Heart right ventricle (tissue), 16 donors: ENCODE measurements at regions of chr1 and their contacts with region 1.

Region 1: GRCh38 chr1:40668769-40669525 is 3.5 kb upstream of the RIMS3 start:
- DNase-seq: peak; percentile 73 to 80
- ATAC-seq: peak in 7 of 8 donors; percentile 26 to 79 (median 67)
- H3K4me3 ChIP-seq: peak overlapping the region in 1 of 10 donors; percentile 30
- H3K27ac ChIP-seq: no peak overlapping the region
- H3K4me1 ChIP-seq: peaks cover 0 to 16% (median 12%) of the 10 kb centered on the region in 9 donors
- H3K27me3 ChIP-seq: peaks cover 0 to 3% (median 0%) of the 10 kb centered on the region in 7 donors
- CTCF ChIP-seq: peak; percentile 90 to 98 (median 96)

Region 2: DNA sequence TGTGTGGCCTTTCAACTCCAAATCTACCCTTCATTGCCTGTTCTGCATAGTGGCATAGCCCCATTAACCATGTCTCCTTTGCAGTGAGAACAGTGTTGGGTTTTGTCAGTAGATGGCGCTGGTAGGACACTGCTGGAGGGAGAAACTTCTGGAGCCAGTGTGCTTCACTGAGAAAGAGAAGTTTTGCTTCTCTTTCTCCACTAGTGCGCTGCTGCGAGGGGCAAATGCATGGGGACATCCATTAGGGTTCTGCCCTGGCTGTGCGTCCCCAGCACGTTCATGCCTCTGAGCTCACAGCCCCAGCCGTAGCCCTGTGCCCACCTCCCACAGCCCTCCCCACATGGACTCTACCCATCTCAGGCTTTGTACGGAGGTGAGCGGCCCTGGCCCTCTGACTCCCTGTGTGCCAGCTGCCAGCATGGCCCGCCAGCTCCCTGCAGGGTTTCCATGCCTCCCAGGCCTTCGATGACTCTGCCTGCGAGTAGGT is 56.6 kb before region 1 on chr1:
- intact Hi-C with region 1: loop called in 7 of 10 experiments (anchors 2 to 10 kb)
- DNase-seq: peak in 1 of 2 donors; percentile 74
- ATAC-seq: peak; percentile 75 to 90 (median 84)
- H3K4me3 ChIP-seq: no peak overlapping the region
- H3K27ac ChIP-seq: no peak overlapping the region
- H3K4me1 ChIP-seq: peaks cover 0 to 6% (median 0%) of the 10 kb centered on the region in 9 donors
- H3K27me3 ChIP-seq: peaks cover 0 to 5% (median 0%) of the 10 kb centered on the region in 7 donors
- CTCF ChIP-seq: peak; percentile 42 to 88 (median 84)

Region 3: DNA sequence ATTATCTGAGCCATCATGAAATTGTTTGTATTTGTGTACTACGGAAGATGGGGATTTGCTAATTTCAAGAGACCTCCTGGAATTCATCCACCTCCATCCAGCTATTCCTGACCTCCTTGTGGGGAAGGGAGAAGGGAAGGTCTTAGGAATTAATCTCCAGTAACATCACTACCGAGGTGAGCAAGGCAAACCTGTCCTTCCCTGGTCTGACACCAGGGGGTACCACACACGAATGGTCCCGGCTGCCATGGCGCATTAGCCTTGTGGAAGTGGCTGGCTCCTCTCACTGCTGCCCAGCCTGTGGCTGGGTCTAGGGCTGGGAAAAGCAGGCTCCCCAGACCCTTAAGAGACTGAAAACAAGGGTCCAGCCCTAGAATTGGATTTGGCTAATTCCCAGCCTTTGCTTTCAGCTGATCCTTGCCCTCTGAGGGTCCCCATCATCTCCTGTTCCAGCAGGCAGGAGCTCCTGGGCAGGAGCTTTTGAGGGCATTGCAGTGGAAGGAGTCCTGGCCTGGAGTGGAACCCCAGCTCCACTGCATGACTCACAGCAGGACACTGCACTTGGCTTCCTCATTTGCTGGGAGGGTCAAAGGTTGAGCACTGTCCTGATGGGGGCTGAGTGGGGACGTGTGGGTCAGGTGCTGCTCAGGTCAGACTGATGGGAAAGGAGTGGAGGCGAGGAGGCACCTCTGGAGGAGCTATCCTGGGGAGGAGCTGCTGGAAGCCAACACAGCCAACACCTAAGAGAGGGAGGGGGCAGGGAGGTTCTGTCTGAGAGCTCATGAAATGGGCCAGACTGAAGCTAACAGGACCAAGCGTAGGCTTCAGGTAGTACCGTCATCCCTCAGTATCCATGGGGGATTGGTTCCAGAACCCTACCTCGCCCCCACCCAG is 38.2 kb before region 1 on chr1:
- intact Hi-C with region 1: loop called in 3 of 10 experiments (anchors 5 kb)
- DNase-seq: no peak
- ATAC-seq: peak in 3 of 8 donors; percentile 43 to 59 (median 51)
- H3K4me3 ChIP-seq: no peak overlapping the region
- H3K27ac ChIP-seq: no peak overlapping the region
- H3K4me1 ChIP-seq: peaks cover 0 to 15% (median 8%) of the 10 kb centered on the region in 9 donors
- H3K27me3 ChIP-seq: no peaks in the 10 kb centered on the region
- CTCF ChIP-seq: peak in 8 of 9 donors; percentile 36 to 56 (median 46)